ENCODE measurements at regions of chr1 and their contacts with region 1.

Region 1: GRCh38 chr1:161117759-161118581 is at the starts of genes NIT1 and PFDN2:
- DNase-seq: peak; percentile 85 to 93
- ATAC-seq: peak; percentile 77 to 89 (median 85)
- H3K4me3 ChIP-seq: peak within 1 kb of the TSS; percentile 96
- H3K4me3 Mint-ChIP-seq: peak within 1 kb of the TSS; percentile 95
- H3K27ac ChIP-seq: peak within 1 kb of the TSS; percentile 88
- H3K27ac Mint-ChIP-seq: peak within 1 kb of the TSS; percentile 88 to 96
- H3K4me1 ChIP-seq: peaks cover 38% of the 10 kb centered on the region
- H3K4me1 Mint-ChIP-seq: peaks cover 39 to 46% of the 10 kb centered on the region in 2 donors
- H3K27me3 ChIP-seq: no peaks in the 10 kb centered on the region
- H3K27me3 Mint-ChIP-seq: no peaks in the 10 kb centered on the region
- CTCF ChIP-seq: no peak
- total RNA-seq, gene NIT1: 26.5 to 31.7 (median 31.6) TPM
- total RNA-seq, gene PFDN2: 31.6 to 40.0 (median 35.0) TPM

Region 2: GRCh38 chr1:160885042-160885441 is 232.9 kb before region 1 on chr1 and contains the start of gene ITLN1:
- intact Hi-C with region 1: no loop called
- DNase-seq: no peak
- ATAC-seq: no peak
- H3K4me3 ChIP-seq: no peak within 1 kb of the TSS
- H3K4me3 Mint-ChIP-seq: no peak within 1 kb of the TSS
- H3K27ac ChIP-seq: no peak within 1 kb of the TSS
- H3K27ac Mint-ChIP-seq: no peak within 1 kb of the TSS
- H3K4me1 ChIP-seq: peaks cover 6% of the 10 kb centered on the region
- H3K4me1 Mint-ChIP-seq: peaks cover 0 to 8% of the 10 kb centered on the region in 2 donors
- H3K27me3 ChIP-seq: no peaks in the 10 kb centered on the region
- H3K27me3 Mint-ChIP-seq: peaks cover 0 to 2% of the 10 kb centered on the region in 2 donors
- CTCF ChIP-seq: no peak
- total RNA-seq, gene ITLN1: not detected

Region 3: GRCh38 chr1:161132410-161133219 is 14.6 kb after region 1 on chr1 and contains the start of gene DEDD:
- intact Hi-C with region 1: loop called (anchors 1 kb)
- DNase-seq: peak; percentile 81 to 95
- ATAC-seq: peak; percentile 92 to 97 (median 95)
- H3K4me3 ChIP-seq: peak within 1 kb of the TSS; percentile 77
- H3K4me3 Mint-ChIP-seq: no peak within 1 kb of the TSS
- H3K27ac ChIP-seq: peak within 1 kb of the TSS; percentile 81
- H3K27ac Mint-ChIP-seq: no peak within 1 kb of the TSS
- H3K4me1 ChIP-seq: peaks cover 21% of the 10 kb centered on the region
- H3K4me1 Mint-ChIP-seq: peaks cover 21 to 43% of the 10 kb centered on the region in 2 donors
- H3K27me3 ChIP-seq: no peaks in the 10 kb centered on the region
- H3K27me3 Mint-ChIP-seq: no peaks in the 10 kb centered on the region
- CTCF ChIP-seq: no peak
- total RNA-seq, gene DEDD: 40.6 to 44.0 (median 43.0) TPM